Activated naive CD4-positive, alpha-beta T cell treated with anti-CD3 and anti-CD28 coated beads for 36 hours (primary cell): ENCODE measurements at regions of chr4 and their contacts with region 1.

Region 1: DNA sequence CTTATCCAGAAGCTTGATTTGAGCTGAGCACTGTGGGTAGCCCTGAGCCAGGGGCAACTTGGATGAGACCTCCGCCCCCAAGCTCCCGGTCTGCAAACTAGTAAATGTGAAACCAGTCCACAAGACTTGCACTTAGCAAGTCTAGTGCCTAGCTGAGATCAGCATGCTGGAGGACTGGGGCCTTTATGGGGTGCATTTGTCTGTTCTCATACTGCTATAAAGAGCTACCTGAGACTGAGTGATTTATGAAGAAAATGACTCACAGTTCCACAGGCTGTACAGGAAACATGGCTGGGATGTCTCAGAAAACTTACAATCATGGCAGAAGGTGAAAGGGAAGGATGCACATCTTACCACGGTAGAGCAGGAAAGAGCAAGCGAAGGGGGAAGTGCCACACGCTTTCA is 42.1 kb upstream of the HOPX start:
- DNase-seq: peak; percentile 79
- H3K4me3 Mint-ChIP-seq: no peak overlapping the region
- H3K27ac Mint-ChIP-seq: peak overlapping the region; percentile 69
- H3K4me1 Mint-ChIP-seq: peaks cover 15% of the 10 kb centered on the region
- H3K27me3 Mint-ChIP-seq: no peaks in the 10 kb centered on the region

Region 2: DNA sequence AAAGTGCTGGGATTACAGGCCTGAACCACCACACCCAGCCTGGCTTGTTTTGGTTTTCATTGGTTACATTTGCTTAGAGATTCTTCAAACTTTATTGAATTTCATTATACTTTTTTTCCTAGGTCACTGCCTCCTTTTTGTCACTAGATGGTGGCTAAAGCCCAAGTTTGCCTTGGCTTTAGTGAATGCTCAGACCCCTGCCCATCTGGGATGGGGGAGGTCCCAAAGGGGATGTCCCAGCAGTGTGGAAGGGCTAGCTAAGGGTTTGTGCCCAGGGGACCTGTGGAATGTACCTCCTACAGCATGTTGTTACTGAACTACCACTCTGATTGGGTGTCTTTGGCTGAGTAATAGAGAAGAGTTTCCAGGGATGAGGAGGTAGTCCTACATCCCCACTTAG is 716.0 kb before region 1 on chr4:
- CTCF ChIA-PET with region 1: no interaction called
- intact Hi-C with region 1: no loop called
- DNase-seq: no peak
- H3K4me3 Mint-ChIP-seq: no peak overlapping the region
- H3K27ac Mint-ChIP-seq: no peak overlapping the region
- H3K4me1 Mint-ChIP-seq: peaks cover 10% of the 10 kb centered on the region
- H3K27me3 Mint-ChIP-seq: no peaks in the 10 kb centered on the region

Region 3: DNA sequence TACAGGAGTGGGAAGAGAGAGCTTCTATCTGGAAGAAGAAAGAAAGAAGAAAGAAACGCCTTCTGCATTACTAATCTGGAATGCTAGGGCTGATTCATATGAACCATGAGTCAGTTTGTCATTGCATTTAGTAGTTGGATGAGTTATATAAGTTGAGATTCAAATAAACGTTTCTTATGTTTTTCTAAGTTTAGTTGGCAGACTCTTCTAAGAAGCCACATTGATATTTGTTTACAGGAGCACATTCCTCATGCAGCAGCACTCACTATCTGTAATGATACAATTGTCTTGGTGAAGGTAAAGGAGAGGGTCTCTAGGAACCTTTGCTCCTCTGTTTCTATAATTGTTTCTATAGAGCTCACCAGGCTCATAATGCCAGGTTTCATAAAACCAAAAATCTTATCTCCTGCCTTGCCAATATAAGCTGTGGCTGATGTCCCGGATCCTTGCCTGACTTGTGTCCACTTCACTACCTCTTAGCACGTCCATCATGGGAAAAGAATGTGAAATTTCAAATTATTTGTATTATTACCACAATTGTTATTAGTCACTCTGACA is 81.6 kb before region 1 on chr4:
- CTCF ChIA-PET with region 1: interaction called, 4 read pairs
- intact Hi-C with region 1: loop called (anchors 1 kb)
- DNase-seq: no peak
- H3K4me3 Mint-ChIP-seq: no peak overlapping the region
- H3K27ac Mint-ChIP-seq: peak overlapping the region; percentile 60
- H3K4me1 Mint-ChIP-seq: peaks cover 17% of the 10 kb centered on the region
- H3K27me3 Mint-ChIP-seq: peaks cover 8% of the 10 kb centered on the region

Region 4: GRCh38 chr4:56757821-56758411 is 34.7 kb after region 1 on chr4:
- CTCF ChIA-PET with region 1: interaction called, 3 read pairs
- intact Hi-C with region 1: loop called (anchors 1 kb)
- DNase-seq: peak; percentile 92
- H3K4me3 Mint-ChIP-seq: peak overlapping the region; percentile 57
- H3K27ac Mint-ChIP-seq: peak overlapping the region; percentile 89
- H3K4me1 Mint-ChIP-seq: peaks cover 26% of the 10 kb centered on the region
- H3K27me3 Mint-ChIP-seq: no peaks in the 10 kb centered on the region

Region 5: DNA sequence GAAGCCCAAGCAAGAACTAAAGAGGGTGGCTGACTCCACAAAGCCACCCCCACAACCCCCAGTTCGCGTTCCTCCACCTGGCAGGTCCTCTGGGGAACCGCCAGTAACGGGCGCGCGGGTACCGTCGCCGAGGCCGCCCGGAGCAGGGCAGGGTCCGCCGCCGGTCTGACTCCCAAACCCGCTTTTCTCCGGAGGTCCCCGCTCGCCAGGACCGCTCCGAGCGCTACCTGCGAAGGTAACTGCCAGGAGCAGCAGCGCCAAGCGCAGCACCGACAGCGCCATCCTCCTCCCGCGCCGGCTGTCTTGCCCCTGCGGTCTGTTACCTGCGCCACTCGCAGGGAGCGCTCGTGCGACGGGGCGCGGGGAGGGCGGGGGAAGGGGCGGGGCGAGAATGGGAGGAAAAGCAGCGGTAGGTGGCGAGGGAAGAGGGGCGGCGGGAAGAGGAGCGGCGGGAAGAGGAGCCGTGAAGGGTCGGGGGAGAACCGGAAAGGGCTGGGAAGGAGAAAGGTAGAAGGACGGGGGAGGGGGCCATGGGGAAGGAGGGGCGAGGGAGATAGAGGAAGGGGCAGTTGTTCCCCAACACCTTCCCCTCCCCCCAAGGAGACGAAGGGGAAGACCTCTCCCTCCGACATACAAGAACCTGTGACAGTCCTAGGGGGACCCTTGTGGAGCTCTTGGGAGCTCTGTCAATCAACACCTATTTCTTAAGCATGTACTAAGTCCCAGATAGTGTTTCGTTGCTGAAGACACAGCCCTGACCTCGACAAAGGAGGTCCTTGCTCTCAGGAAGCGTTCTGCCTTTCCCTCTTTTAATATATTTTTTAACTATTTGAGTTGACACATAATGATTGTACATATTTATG is 98.4 kb after region 1 on chr4 and contains the start of gene SPINK2:
- CTCF ChIA-PET with region 1: no interaction called
- intact Hi-C with region 1: loop called (anchors 1 kb)
- DNase-seq: peak; percentile 75
- H3K4me3 Mint-ChIP-seq: peak within 1 kb of the TSS; percentile 74
- H3K27ac Mint-ChIP-seq: no peak within 1 kb of the TSS
- H3K4me1 Mint-ChIP-seq: peaks cover 25% of the 10 kb centered on the region
- H3K27me3 Mint-ChIP-seq: peaks cover 12% of the 10 kb centered on the region
- total RNA-seq, gene SPINK2: 0.83 to 1.4 TPM